ENCODE measurements at regions of chr14 and their contacts with region 1.

Region 1: DNA sequence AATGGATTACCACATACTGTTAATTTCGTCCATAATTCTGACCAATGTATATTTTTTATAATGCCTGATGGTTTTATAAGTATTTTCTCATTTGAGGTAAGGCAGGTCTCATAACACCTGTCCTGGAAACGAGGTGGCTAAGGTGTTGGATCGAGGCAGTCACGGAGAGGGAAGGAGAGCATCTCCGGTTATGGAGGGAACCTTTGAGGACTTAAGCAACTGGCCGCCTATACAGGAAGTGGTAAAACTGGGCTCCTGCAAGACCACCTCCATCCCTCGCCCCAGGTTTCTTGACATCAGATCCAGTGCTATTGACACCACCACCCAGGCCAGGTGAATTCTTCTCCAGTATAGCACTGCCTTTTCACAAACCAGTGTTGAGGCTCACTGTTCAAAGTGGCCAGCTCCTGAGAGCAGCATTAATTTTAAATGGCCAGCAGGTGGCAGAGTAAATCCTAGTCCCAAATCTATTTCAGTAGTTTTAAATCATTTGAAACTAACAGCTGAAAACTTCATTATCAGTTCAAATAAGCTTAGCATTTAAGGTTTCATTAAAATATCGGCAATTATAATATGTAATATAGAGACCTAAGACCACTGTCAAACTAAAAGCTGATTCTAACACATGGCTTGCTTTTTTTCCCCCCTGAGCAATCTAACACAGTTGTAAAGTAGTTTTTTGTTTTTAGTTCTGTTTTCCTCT is 100.8 kb downstream of the PPM1A start:
- DNase-seq: peak; percentile 56
- ATAC-seq: peak; percentile 96
- H3K4me3 ChIP-seq: no peak overlapping the region
- H3K27ac ChIP-seq: no peak overlapping the region
- H3K4me1 ChIP-seq: no peaks in the 10 kb centered on the region
- H3K27me3 ChIP-seq: peaks cover 15% of the 10 kb centered on the region
- CTCF ChIP-seq: peak; percentile 68
- POLR2A ChIP-seq: no peak
- RAD21 ChIP-seq: peak; percentile 52

Region 2: DNA sequence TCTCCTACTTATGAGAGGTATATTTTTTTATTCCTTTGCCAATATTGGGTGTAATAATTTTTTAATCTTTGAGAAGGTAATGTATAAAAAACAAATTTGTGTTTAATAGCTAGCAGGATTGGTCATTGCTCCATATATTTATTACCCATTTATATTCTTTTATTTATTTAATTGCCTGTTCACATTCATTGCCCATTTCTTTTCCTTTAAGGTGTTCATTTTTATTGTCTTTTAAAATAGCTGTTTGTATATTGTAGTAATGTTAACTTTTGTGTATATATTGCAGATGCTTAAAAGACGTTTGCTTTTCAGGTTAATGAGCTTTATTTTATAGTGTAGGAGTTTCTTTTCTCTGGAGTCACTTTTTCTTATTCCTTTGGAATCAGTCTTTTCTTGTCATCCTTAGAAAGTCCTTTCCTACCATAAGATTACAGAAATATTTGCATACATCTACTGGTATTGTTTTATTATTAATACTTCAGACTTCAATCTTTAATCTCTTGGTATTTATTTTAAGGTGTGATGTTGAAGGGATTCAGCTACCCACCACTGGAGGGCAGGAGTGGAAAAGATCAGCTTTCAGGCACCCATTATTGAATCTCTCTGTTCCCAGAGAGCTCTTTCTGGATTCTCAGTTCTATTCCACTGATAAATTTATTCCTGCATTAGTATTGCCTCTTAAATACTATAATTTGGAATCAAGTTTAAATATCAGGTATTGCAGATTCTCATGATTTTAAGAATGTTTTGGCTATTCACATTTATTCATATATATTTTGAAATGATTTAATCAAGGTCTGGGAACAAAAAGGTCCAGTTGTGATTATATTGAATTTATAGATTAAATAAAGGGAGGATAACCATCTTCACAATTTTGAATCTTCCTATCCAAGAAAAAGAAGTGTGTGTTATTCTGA is 83.5 kb before region 1 on chr14:
- CTCF ChIA-PET with region 1: interaction called, 11 read pairs
- POLR2A ChIA-PET with region 1: no interaction called
- dilution Hi-C with region 1: no loop called
- in situ Hi-C with region 1: no loop called
- intact Hi-C with region 1: no loop called
- DNase-seq: no peak
- ATAC-seq: no peak
- H3K4me3 ChIP-seq: no peak overlapping the region
- H3K27ac ChIP-seq: no peak overlapping the region
- H3K4me1 ChIP-seq: no peaks in the 10 kb centered on the region
- H3K27me3 ChIP-seq: no peaks in the 10 kb centered on the region
- CTCF ChIP-seq: peak; percentile 40
- POLR2A ChIP-seq: no peak
- RAD21 ChIP-seq: peak; percentile 35

Region 3: DNA sequence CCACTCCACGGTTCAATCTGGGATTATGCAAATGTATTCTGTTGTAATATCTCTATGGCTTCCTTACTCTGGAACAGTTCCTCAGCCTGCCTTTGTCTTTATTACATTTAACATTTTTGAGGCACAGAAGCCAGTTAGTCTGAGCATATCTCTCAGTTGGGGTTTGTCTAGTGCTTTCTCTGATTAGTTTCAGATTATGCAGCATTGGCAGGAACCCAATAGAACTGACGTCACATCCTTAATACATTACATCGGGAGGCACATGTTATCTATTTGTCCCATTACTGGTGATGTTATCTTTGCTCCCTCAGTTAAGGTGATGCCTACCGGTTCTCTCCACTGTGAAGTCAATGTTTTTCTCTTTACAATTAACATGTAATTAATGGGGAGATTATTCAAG is 38.4 kb before region 1 on chr14:
- CTCF ChIA-PET with region 1: no interaction called
- POLR2A ChIA-PET with region 1: no interaction called
- dilution Hi-C with region 1: no loop called
- in situ Hi-C with region 1: no loop called
- intact Hi-C with region 1: no loop called
- DNase-seq: peak; percentile 66
- ATAC-seq: no peak
- H3K4me3 ChIP-seq: no peak overlapping the region
- H3K27ac ChIP-seq: no peak overlapping the region
- H3K4me1 ChIP-seq: no peaks in the 10 kb centered on the region; the same call in 1 of the 2 replicates
- H3K27me3 ChIP-seq: peaks cover 15% of the 10 kb centered on the region
- CTCF ChIP-seq: no peak
- POLR2A ChIP-seq: no peak
- RAD21 ChIP-seq: no peak

Region 4: DNA sequence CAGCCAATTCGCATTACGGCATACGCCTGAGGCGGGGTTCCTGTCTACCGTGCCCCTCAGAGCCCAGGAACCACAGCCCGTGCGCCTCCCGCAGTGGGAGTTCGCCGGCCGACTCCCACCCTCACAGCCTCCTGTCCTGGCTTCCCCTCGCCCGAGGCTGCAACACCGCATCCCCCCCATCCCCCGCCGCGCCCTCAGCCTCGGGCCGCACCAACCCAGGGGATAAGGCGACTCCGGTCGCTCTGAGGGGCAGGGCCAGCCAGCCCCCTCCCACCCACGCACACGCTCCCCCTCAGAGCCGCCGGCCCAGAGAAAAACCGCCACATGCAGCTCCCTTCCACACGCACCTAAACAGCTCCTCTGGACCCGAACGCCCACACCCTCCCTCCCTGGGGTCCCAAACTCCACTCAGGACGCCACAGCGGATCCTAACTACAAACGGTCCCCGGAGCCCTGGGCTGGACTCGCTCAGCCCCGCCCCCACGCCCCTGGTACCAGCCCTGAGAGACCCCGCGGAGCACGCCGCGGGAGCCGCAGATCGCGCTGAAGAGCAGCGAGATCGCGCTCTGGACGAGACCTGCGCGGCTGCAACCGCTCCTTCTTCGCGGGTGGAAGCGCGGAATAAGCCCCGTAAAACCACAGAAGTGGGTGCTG is 135.9 kb after region 1 on chr14 and contains the start of gene C14orf39:
- CTCF ChIA-PET with region 1: no interaction called
- POLR2A ChIA-PET with region 1: no interaction called
- dilution Hi-C with region 1: no loop called
- in situ Hi-C with region 1: no loop called
- intact Hi-C with region 1: loop called (anchors 5 kb)
- DNase-seq: peak; percentile 65
- ATAC-seq: peak; percentile 97
- H3K4me3 ChIP-seq: peak within 1 kb of the TSS; percentile 82
- H3K27ac ChIP-seq: peak within 1 kb of the TSS; percentile 68; the same call in 1 of the 2 replicates
- H3K4me1 ChIP-seq: no peaks in the 10 kb centered on the region
- H3K27me3 ChIP-seq: peaks cover 11% of the 10 kb centered on the region
- CTCF ChIP-seq: no peak
- POLR2A ChIP-seq: peak; percentile 38; the same call in 1 of the 2 replicates
- RAD21 ChIP-seq: no peak
- total RNA-seq, gene C14orf39: 0.28 and 0.36 TPM in 2 replicates

Region 5: GRCh38 chr14:60561845-60562746 is 212.3 kb after region 1 on chr14:
- CTCF ChIA-PET with region 1: interaction called, 15 read pairs
- POLR2A ChIA-PET with region 1: no interaction called
- dilution Hi-C with region 1: no loop called
- in situ Hi-C with region 1: loop called (anchors 5 kb)
- intact Hi-C with region 1: loop called (anchors 1 kb)
- DNase-seq: peak; percentile 82
- ATAC-seq: peak; percentile 89
- H3K4me3 ChIP-seq: no peak overlapping the region
- H3K27ac ChIP-seq: no peak overlapping the region
- H3K4me1 ChIP-seq: 0 out of 2 replicates have a peak, but pooled peaks cover 1% of the 10 kb centered on the region
- H3K27me3 ChIP-seq: no peaks in the 10 kb centered on the region
- CTCF ChIP-seq: peak; percentile 80
- POLR2A ChIP-seq: no peak
- RAD21 ChIP-seq: peak; percentile 79

Region 6: GRCh38 chr14:60622917-60623257 is 273.1 kb after region 1 on chr14:
- CTCF ChIA-PET with region 1: interaction called, 5 read pairs
- POLR2A ChIA-PET with region 1: no interaction called
- dilution Hi-C with region 1: no loop called
- in situ Hi-C with region 1: no loop called
- intact Hi-C with region 1: loop called (anchors 2 kb)
- DNase-seq: peak; percentile 70
- ATAC-seq: no peak
- H3K4me3 ChIP-seq: no peak overlapping the region
- H3K27ac ChIP-seq: peak overlapping the region; percentile 53; the same call in 1 of the 2 replicates
- H3K4me1 ChIP-seq: peaks cover 8% of the 10 kb centered on the region
- H3K27me3 ChIP-seq: no peaks in the 10 kb centered on the region
- CTCF ChIP-seq: no peak
- POLR2A ChIP-seq: no peak
- RAD21 ChIP-seq: no peak

Region 7: DNA sequence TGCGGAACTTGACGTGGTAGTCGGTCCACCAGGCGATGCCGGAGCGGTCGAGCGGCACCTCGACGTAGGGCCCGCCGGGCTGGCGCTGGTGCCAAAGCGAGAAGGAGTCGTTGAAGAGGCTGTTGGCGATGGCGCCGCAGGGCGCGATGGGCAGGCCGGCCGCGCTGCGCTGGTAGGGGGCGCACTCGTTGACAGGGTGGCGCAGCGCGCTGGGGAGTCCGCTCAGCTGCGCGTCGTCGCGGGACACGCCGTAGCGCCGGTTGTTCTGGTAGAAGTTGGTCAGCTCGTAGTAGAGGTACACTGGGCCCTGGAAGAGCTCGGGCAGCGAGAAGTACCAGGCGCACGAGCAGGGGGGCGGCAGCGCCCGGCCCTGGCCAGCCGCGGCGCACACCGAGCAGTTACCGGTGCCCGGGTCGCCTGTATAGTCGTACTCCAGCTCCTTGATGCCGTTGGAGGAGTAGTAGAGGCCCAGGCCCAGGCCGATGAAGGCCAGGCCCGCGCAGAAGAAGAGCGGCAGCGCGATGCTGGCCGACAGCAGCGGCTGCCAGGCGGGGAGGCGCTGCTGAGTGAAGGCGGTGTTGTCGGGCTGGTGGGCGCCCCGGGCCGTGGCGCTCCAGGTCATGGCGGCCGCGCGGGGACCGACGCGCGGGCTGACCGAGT is 930.8 kb after region 1 on chr14:
- CTCF ChIA-PET with region 1: interaction called, 3 read pairs
- POLR2A ChIA-PET with region 1: no interaction called
- dilution Hi-C with region 1: no loop called
- in situ Hi-C with region 1: loop called (anchors 10 kb)
- intact Hi-C with region 1: no loop called
- DNase-seq: peak; percentile 34
- ATAC-seq: peak; percentile 82
- H3K4me3 ChIP-seq: peak overlapping the region; percentile 22
- H3K27ac ChIP-seq: no peak overlapping the region
- H3K4me1 ChIP-seq: no peaks in the 10 kb centered on the region
- H3K27me3 ChIP-seq: peaks cover 25% of the 10 kb centered on the region
- CTCF ChIP-seq: peak; percentile 28
- POLR2A ChIP-seq: no peak
- RAD21 ChIP-seq: no peak

Measured in IMR-90 (cell line).